ENCODE measurements at regions of chr17 and their contacts with region 1.

Region 1: GRCh38 chr17:40019140-40019991 is 4.1 kb downstream of the CSF3 start:
- DNase-seq: no peak
- H3K4me3 ChIP-seq: peak overlapping the region in 1 of 2 donors; percentile 25
- H3K27ac ChIP-seq: peak overlapping the region; percentile 89
- H3K4me1 ChIP-seq: peaks cover 100% of the 10 kb centered on the region
- H3K27me3 ChIP-seq: no peaks in the 10 kb centered on the region
- CTCF ChIP-seq: no peak
- POLR2A ChIP-seq: no peak

Region 2: DNA sequence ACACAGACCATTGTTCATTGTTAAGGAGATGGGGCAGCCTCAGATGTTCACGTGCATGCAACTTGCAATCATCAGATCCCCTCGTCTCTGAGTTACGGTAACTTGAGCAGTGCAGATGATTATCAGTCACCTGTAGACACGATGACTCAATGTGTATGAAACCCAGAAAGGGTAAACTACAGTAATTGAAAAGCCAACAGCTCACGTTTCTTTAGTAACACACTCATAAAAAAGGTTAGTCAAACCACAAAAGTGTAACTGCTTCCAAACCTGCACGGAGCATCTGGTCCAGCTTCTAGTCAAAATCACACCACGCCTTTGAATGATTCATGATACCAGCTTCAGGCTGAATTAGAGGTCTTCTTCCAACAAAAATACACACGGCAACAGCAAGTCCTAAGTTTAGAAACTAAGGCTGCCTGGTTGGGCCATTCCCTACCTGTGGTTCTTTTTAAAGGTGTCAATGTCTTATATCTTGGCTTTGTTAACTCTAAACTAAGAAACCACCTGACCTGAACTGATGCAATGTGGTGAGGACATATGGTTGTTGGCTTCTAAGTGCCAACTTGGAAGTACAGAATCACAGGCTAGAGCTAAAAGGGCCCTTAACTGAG is 249.3 kb before region 1 on chr17:
- intact Hi-C with region 1: no loop called
- DNase-seq: no peak
- H3K4me3 ChIP-seq: no peak overlapping the region
- H3K27ac ChIP-seq: no peak overlapping the region
- H3K4me1 ChIP-seq: no peaks in the 10 kb centered on the region
- H3K27me3 ChIP-seq: no peaks in the 10 kb centered on the region
- CTCF ChIP-seq: no peak
- POLR2A ChIP-seq: no peak

Region 3: DNA sequence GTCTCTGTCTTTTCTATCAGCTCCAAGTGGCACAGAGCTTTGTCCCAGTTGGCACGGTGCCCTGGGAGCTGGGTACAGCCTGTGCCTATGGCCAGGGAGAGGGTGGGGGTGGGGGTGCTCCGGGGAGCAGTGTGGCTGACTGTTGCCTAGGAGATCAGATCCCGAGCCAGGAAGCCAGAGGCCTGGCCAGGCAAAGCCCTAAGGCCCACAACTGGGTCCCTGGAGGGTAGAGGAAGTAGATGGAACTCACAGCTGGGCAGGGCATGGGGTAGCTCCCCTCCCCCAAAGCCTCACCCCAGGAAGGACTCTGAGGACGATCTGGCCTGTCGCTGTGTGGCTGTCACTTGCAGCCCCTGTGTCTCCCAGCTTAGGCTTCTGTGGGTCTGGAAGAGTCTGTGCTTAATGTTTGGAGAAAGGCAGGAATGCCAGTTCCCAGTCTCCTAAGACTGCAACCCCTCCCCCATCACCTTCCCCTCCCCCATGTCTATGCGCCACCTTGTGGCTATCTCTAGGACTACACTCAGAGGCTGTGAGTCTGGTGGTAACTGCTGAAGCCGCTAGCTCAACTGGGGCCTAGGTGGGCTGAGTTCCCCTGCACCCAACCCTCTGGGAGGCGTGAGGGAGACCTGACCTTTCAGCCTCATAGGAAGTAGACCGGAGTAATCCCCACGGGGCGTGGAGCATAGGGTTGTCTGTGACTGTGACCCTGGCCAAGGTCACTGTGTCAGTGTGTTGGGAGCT is 56.0 kb after region 1 on chr17:
- intact Hi-C with region 1: no loop called
- DNase-seq: no peak
- H3K4me3 ChIP-seq: peak overlapping the region; percentile 17 to 34
- H3K27ac ChIP-seq: peak overlapping the region; percentile 99
- H3K4me1 ChIP-seq: peaks cover 67% of the 10 kb centered on the region
- H3K27me3 ChIP-seq: no peaks in the 10 kb centered on the region
- CTCF ChIP-seq: peak; percentile 75 to 93 (median 92)
- POLR2A ChIP-seq: no peak

Region 4: GRCh38 chr17:40168262-40168832 is 149.0 kb after region 1 on chr17:
- intact Hi-C with region 1: loop called (anchors 5 kb)
- DNase-seq: no peak
- H3K4me3 ChIP-seq: no peak overlapping the region
- H3K27ac ChIP-seq: peak overlapping the region; percentile 60
- H3K4me1 ChIP-seq: no peaks in the 10 kb centered on the region
- H3K27me3 ChIP-seq: no peaks in the 10 kb centered on the region
- CTCF ChIP-seq: peak; percentile 54 to 91 (median 77)
- POLR2A ChIP-seq: no peak

Region 5: GRCh38 chr17:40542558-40543411 is 523.4 kb after region 1 on chr17:
- intact Hi-C with region 1: no loop called
- DNase-seq: peak in 1 of 2 donors; percentile 99
- H3K4me3 ChIP-seq: no peak overlapping the region
- H3K27ac ChIP-seq: peak overlapping the region; percentile 91
- H3K4me1 ChIP-seq: peaks cover 72% of the 10 kb centered on the region
- H3K27me3 ChIP-seq: no peaks in the 10 kb centered on the region
- CTCF ChIP-seq: no peak
- POLR2A ChIP-seq: no peak